ENCODE measurements at regions of chr2 and their contacts with region 1.

Region 1: DNA sequence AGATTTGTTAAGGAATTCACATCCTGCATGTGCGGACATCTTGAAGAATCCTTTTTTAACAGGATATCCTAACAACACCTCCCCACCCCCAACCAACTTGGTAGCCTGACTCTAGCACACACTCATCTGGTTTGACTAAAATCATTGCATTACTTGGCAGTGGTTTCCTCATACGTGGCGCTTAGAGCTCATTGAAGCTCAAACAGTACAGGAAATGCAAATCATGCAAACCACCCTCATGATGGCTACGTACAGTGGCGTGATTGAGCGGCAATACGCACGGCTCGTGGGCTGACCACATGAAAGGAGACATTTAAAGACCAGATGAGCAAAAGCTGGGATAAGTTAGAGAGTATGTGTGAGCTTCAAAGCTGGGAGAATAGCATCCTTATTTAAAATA is 336.2 kb downstream of the ZEB2 start:
- DNase-seq: peak; percentile 89
- H3K4me3 Mint-ChIP-seq: peak overlapping the region; percentile 52
- H3K27ac Mint-ChIP-seq: peak overlapping the region; percentile 81
- H3K4me1 Mint-ChIP-seq: peaks cover 42% of the 10 kb centered on the region
- H3K27me3 Mint-ChIP-seq: no peaks in the 10 kb centered on the region

Region 2: GRCh38 chr2:143128681-143129580 is 1054.8 kb before region 1 on chr2 and contains the start of gene ARHGAP15:
- CTCF ChIA-PET with region 1: no interaction called
- intact Hi-C with region 1: loop called (anchors 2 kb)
- DNase-seq: peak; percentile 88
- H3K4me3 Mint-ChIP-seq: peak within 1 kb of the TSS; percentile 86
- H3K27ac Mint-ChIP-seq: peak within 1 kb of the TSS; percentile 100
- H3K4me1 Mint-ChIP-seq: peaks cover 31% of the 10 kb centered on the region
- H3K27me3 Mint-ChIP-seq: no peaks in the 10 kb centered on the region
- total RNA-seq, gene ARHGAP15: 85.7 to 90.1 TPM

Region 3: DNA sequence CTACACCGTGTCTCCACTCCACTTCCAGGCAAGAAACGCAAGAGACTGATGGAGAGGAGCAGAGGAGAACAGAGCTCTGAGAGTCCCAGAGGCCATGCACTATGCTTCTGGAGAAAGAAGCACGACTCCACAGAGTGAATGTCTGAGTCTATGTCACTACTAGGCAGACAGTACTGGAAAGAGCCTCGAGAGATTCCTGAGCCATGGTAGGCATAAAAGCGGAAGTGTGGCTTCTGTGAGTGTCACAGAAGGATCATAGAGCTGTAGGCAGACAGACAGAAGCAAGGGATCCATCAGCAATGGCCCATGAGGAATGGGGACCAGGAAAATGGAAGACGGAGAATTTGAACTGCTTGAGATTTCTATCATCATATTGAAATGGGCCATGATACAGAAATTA is 206.4 kb before region 1 on chr2:
- CTCF ChIA-PET with region 1: no interaction called
- intact Hi-C with region 1: no loop called
- DNase-seq: no peak
- H3K4me3 Mint-ChIP-seq: no peak overlapping the region
- H3K27ac Mint-ChIP-seq: no peak overlapping the region
- H3K4me1 Mint-ChIP-seq: no peaks in the 10 kb centered on the region
- H3K27me3 Mint-ChIP-seq: no peaks in the 10 kb centered on the region

Region 4: GRCh38 chr2:144162652-144163051 is 21.1 kb before region 1 on chr2:
- CTCF ChIA-PET with region 1: no interaction called
- intact Hi-C with region 1: loop called (anchors 1 kb)
- DNase-seq: peak; percentile 66
- H3K4me3 Mint-ChIP-seq: no peak overlapping the region
- H3K27ac Mint-ChIP-seq: no peak overlapping the region
- H3K4me1 Mint-ChIP-seq: peaks cover 5% of the 10 kb centered on the region
- H3K27me3 Mint-ChIP-seq: no peaks in the 10 kb centered on the region

Region 5: DNA sequence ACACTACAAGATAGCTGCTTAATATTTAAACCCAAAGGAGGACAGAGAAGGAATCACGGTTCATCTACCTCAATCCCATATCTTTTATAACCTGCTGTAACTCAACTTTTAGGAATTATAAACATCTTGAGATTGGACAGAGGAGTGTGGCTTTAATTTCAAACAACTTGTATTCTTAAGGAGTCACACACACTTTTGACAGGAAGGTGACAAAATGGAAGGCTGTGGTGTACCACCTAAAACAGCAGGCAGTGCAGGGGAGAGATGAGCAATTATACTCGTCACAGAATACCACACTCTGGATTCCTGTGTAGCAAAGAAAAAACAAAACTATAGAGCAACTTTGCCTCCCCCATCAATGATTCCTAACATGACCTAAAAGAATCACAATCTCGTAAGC is 141.4 kb after region 1 on chr2:
- CTCF ChIA-PET with region 1: no interaction called
- intact Hi-C with region 1: loop called (anchors 1 kb)
- DNase-seq: peak; percentile 70
- H3K4me3 Mint-ChIP-seq: peak overlapping the region; percentile 12
- H3K27ac Mint-ChIP-seq: peak overlapping the region; percentile 83
- H3K4me1 Mint-ChIP-seq: peaks cover 63% of the 10 kb centered on the region
- H3K27me3 Mint-ChIP-seq: no peaks in the 10 kb centered on the region

Region 6: DNA sequence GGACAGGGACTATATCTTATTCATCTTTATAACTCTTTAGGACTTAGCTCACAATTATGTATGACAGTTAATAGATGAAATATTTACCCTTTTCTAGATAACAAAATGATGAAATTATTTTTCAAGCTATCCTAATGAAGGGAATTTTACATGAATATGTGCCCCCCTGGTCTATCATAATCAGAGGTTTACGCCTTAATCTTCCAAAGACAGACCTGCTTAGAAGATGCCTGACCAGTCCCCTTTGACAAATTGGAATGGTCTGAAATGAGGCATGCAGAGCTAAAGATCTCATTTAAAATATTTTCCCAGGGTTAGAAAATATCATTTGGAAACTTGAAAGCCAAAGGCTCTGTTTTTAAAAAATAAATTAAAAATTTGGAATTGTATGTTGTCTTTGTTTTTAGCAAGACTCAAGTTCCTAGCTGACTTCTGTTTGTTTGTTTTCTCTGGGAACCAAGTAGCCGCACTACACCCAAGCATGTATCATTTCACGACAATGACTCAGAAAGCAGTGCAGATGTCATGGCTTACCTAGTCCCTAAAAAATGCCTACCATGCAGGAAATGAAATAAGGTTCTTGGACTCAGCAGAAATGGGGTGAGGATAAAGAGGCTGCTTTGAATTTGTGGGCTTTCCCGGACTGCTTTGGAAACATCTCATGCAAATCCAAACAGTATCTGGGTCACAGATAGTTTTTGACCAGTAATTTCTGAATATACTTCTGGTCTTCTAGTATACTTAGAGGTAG is 174.1 kb after region 1 on chr2:
- CTCF ChIA-PET with region 1: no interaction called
- intact Hi-C with region 1: loop called (anchors 1 kb)
- DNase-seq: peak; percentile 47
- H3K4me3 Mint-ChIP-seq: no peak overlapping the region
- H3K27ac Mint-ChIP-seq: no peak overlapping the region
- H3K4me1 Mint-ChIP-seq: peaks cover 18% of the 10 kb centered on the region
- H3K27me3 Mint-ChIP-seq: no peaks in the 10 kb centered on the region

Measured in activated naive CD4-positive, alpha-beta T cell treated with anti-CD3 and anti-CD28 coated beads for 36 hours (primary cell).